ENCODE measurements at regions of chr1 and their contacts with region 1.

Region 1: GRCh38 chr1:20493839-20494608 is 8.0 kb upstream of the CAMK2N1 start:
- DNase-seq: peak; percentile 74
- H3K4me3 ChIP-seq: no peak overlapping the region
- H3K27me3 ChIP-seq: peaks cover 2% of the 10 kb centered on the region; the same call in 1 of the 2 replicates
- CTCF ChIP-seq: peak; percentile 96

Region 2: DNA sequence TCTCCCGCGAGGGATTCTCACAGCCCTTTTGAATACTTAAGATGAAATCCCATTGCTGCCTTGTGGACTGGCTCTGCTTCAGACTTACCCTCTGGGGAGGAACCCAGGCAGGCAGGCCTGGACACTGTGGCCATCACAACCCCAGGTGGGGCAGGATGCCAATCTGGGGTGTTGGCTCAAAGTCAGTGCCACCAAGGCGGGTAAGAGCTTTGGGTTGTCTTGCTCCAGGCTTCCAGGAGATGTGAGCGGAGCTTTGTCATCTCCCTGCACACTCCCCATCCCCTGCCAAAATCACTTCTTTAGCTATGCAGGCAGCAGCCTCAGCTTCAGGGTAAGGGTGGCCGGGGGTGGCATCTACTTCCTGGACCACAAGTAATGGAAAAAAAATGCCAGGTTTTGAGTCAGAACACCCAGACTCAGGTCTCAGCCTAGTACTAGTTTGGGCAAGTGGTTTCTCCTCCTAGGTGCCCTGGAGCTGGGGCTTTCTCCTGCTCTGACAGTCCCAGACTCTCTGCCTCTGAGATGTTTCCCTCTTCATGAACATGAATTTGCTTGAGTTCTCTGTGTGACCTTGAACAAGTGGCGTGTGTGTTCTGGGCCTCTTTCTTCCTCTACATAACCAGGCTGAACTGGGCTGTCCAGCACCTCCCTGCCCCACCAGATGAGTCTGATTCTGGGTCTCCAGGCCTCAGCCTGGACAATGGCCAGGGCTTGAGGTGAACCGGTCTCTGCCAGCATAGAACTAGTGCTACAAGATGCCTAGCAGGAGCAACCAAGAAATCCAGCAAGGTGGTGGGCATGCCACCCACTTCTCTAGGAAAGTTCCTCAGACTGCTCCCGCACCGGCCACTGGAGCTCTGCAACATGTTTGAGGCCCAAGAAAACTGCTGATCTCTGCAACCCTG is 137.9 kb before region 1 on chr1:
- CTCF ChIA-PET with region 1: interaction called, 111 read pairs
- POLR2A ChIA-PET with region 1: no interaction called
- DNase-seq: no peak
- H3K4me3 ChIP-seq: no peak overlapping the region
- H3K27me3 ChIP-seq: peaks cover 7% of the 10 kb centered on the region
- CTCF ChIP-seq: no peak

Region 3: GRCh38 chr1:20367116-20367585 is 126.9 kb before region 1 on chr1:
- CTCF ChIA-PET with region 1: interaction called, 111 read pairs
- POLR2A ChIA-PET with region 1: no interaction called
- DNase-seq: no peak
- H3K4me3 ChIP-seq: no peak overlapping the region
- H3K27me3 ChIP-seq: peaks cover 43% of the 10 kb centered on the region
- CTCF ChIP-seq: peak; percentile 76

Region 4: GRCh38 chr1:20466273-20466672 is 27.8 kb before region 1 on chr1:
- CTCF ChIA-PET with region 1: interaction called, 15 read pairs
- POLR2A ChIA-PET with region 1: interaction called, 12 read pairs
- DNase-seq: no peak
- H3K4me3 ChIP-seq: no peak overlapping the region
- H3K27me3 ChIP-seq: peaks cover 7% of the 10 kb centered on the region; the same call in 1 of the 2 replicates
- CTCF ChIP-seq: no peak

Region 5: GRCh38 chr1:20640183-20640597 is 146.2 kb after region 1 on chr1:
- CTCF ChIA-PET with region 1: no interaction called
- POLR2A ChIA-PET with region 1: no interaction called
- DNase-seq: no peak
- H3K4me3 ChIP-seq: no peak overlapping the region
- H3K27me3 ChIP-seq: no peaks in the 10 kb centered on the region
- CTCF ChIP-seq: peak; percentile 77

Measured in BJ (cell line).